ENCODE measurements at regions of chr10 and their contacts with region 1.

Region 1: DNA sequence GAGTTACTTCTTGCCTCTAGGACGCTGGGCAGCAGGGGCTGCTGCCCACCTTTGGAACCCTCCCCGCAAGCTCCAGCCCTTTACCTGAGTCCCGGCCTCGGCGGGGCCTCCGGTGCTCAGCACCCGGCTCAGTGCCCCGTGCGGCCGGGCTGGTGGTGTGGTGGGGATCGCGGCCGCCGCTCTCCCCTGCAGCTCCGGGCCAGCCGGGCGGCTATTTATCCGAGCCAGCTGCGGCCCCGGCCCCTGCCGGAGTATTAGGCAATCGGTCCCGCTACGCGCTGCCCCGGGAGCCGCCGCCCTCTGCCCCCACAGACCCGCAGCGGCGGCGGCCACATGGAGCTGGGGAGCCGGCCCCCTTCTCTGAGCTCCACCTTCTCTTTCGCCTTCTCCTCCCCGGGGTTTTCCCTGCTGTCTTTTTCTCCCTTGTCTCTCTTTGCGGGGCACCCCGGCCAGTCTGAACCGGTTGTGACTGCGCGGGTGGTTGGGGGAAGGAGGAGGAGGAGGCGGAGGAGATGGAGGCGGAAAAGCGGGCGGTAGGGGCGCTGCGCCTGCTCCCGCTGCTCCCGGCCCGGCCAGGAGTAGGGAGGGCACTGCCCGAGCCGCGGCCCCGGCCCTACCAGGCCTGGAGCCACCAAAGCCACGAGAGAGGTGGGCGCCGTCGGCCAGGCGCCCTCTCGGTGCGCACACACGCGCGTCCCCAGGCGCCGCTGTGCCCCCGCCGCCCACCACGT is at the start of gene SLC16A9:
- DNase-seq: peak; percentile 52 to 80
- ATAC-seq: peak; percentile 91 to 94 (median 92)
- H3K4me3 ChIP-seq: peak within 1 kb of the TSS; percentile 84
- H3K27ac ChIP-seq: peak within 1 kb of the TSS; percentile 78
- H3K4me1 ChIP-seq: peaks cover 18% of the 10 kb centered on the region
- H3K27me3 ChIP-seq: no peaks in the 10 kb centered on the region
- CTCF ChIP-seq: peak; percentile 43
- total RNA-seq, gene SLC16A9: 0.64 to 2.5 (median 1.2) TPM

Region 2: GRCh38 chr10:59465088-59465487 is 244.5 kb before region 1 on chr10:
- intact Hi-C with region 1: no loop called
- DNase-seq: no peak
- ATAC-seq: peak; percentile 58 to 91 (median 70)
- H3K4me3 ChIP-seq: no peak overlapping the region
- H3K27ac ChIP-seq: no peak overlapping the region
- H3K4me1 ChIP-seq: peaks cover 4% of the 10 kb centered on the region
- H3K27me3 ChIP-seq: no peaks in the 10 kb centered on the region
- CTCF ChIP-seq: peak; percentile 62

Region 3: DNA sequence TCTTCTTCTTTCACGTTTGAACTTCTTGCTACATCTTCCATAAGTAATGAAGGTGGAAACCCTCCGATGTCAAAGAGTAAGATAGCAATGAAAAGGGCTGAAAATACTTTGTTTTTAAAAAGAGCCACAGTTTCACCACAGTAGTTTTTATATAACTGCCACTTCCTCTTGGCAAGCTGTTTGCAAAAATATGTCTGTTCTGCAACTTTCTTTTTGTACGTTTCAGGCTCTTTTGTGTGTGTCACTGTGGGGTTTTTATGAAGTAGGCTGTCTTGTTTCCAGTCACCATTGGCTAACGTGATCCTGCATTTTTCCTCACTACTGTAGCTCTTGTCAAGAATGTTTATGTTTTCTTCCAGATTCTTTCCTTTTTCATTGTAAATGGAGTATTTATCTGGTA is 55.6 kb before region 1 on chr10:
- intact Hi-C with region 1: no loop called
- DNase-seq: no peak
- ATAC-seq: no peak
- H3K4me3 ChIP-seq: no peak overlapping the region
- H3K27ac ChIP-seq: no peak overlapping the region
- H3K4me1 ChIP-seq: peaks cover 15% of the 10 kb centered on the region
- H3K27me3 ChIP-seq: no peaks in the 10 kb centered on the region
- CTCF ChIP-seq: no peak

Region 4: DNA sequence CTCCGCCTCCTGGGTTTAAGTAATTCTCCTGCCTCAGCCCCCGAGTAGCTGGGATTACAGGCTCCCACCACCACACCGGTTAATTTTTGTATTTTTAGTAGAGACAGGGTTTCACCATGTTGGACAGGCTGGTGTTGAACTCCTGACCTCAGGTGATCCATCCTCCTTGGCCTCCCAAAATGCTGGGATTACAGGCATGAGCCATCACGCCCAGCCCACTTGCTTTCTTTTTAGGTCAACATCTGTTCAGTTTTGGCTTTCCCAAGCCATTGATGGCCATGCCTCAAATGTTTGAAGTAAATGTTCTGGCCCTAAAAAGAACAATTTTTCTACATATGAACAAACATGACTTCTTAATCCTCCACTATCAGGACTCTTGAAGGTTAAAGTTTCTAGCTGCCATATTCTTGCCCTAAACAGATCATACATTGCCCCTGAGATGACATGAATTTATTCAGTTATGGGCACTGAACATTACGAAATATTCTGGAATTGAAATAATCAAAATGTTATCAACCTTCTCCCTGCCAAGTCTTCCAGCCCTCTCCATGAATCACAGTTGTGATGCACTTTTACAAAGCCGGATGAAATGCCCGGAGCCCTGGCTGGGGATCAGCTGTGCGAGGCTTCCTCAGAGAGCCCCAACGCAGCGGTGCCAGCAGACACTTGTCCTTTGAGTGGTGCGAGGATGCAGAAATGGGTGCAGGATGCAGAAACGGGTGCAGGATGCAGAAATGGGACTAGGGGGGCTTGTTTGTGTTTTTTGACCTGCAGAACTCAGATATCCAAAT is 40.8 kb after region 1 on chr10:
- intact Hi-C with region 1: loop called (anchors 5 kb)
- DNase-seq: peak; percentile 54 to 89
- ATAC-seq: peak; percentile 43 to 83 (median 80)
- H3K4me3 ChIP-seq: peak overlapping the region; percentile 65
- H3K27ac ChIP-seq: peak overlapping the region; percentile 86
- H3K4me1 ChIP-seq: peaks cover 50% of the 10 kb centered on the region
- H3K27me3 ChIP-seq: no peaks in the 10 kb centered on the region
- CTCF ChIP-seq: no peak

Measured in psoas muscle (tissue), 8 donors.